Vagina (tissue), 2 donors: ENCODE measurements at regions of chr17 and their contacts with region 1.

Region 1: DNA sequence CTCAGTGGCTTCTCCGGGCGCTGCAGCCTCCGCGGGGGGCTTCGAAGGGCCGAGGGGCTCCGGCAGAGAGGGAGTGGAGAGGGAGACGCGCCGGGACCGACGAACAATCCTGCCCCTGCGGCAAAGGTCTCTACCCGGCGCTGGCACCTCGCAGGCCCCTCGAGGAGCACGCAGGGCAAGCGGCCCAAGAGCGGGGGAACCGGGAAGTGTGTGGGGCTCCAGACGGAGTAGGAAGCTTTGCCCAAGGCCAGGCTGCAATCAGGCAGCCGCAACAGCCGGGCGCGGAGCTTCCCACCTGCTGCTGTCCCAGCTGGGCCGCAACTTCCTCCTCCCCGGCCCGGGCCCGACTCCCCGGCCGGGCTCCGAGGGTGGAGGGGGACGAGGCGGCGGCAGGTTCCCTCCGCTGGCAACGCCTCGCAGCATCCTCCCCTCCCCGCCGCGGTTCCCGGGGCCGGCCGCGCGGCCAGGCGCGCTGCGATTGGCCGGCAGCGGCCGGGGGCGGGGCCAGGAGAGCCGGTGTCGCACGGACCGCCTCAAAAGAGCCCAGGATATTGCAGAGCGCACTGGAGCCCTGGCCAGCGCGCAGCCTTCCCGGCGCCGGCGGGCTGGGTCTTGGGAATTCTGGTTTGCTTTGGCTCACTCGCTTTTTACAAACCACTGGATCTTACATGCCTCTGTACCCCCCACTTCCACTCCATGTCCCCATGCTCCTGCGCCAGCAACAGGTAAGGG is at the start of gene KCNJ2:
- DNase-seq: no peak
- H3K4me3 ChIP-seq: peak within 1 kb of the TSS; percentile 57 to 58
- H3K27ac ChIP-seq: peak within 1 kb of the TSS; percentile 74
- H3K4me1 ChIP-seq: peaks cover 13% of the 10 kb centered on the region
- H3K27me3 ChIP-seq: no peaks in the 10 kb centered on the region
- CTCF ChIP-seq: no peak
- POLR2A ChIP-seq: peak in 1 of 2 donors; percentile 26
- total RNA-seq, gene KCNJ2: 10.8 TPM

Region 2: GRCh38 chr17:69709441-69709840 is 459.7 kb before region 1 on chr17:
- intact Hi-C with region 1: loop called (anchors 10 kb)
- DNase-seq: no peak
- H3K4me3 ChIP-seq: no peak overlapping the region
- H3K27ac ChIP-seq: no peak overlapping the region
- H3K4me1 ChIP-seq: no peaks in the 10 kb centered on the region
- H3K27me3 ChIP-seq: no peaks in the 10 kb centered on the region
- CTCF ChIP-seq: no peak
- POLR2A ChIP-seq: no peak

Region 3: GRCh38 chr17:70254735-70255460 is 85.8 kb after region 1 on chr17:
- intact Hi-C with region 1: no loop called
- DNase-seq: no peak
- H3K4me3 ChIP-seq: no peak overlapping the region
- H3K27ac ChIP-seq: no peak overlapping the region
- H3K4me1 ChIP-seq: no peaks in the 10 kb centered on the region
- H3K27me3 ChIP-seq: no peaks in the 10 kb centered on the region
- CTCF ChIP-seq: no peak
- POLR2A ChIP-seq: no peak